Sciatic nerve (tissue), 2 donors: ENCODE measurements at regions of chr2 and their contacts with region 1.

Region 1: DNA sequence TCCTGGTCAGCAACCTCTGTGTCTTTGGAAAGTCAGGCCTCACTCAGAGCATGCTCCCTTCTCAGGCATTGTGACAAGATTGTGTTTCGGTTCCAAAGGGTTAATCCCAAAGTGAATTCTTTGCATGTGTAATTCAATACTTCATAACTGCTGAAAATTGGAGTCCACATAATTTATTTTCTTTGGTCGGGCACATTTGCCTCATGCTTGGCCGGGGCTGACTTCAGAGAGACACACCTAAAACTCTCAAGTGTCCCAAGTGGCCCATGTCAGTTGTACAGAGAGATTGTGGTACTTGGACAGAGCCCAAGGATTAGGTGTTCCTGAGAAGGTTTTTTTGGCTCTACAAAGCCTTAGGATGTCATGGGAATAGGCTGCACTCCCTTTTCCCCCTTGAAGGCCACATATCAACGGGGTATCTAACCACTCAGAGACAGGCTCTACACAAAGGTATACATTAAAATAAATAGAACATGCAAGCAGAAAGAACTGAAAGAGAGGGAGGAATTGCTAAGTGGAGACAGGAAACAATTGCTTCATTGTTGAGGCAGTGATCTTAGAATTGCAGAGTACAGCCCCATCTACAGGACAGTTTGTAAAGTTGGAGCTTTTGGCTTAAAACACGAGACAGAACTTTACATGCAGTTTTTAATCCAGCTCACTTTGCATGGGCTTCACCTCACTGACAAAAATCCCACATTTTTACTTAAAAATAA is 1232.3 kb upstream of the ZEB2 start:
- DNase-seq: peak; percentile 59
- ATAC-seq: peak; percentile 87

Region 2: GRCh38 chr2:144519934-144520731 is 1232.1 kb before region 1 on chr2 and contains the start of gene ZEB2:
- intact Hi-C with region 1: loop called (anchors 10 kb)
- DNase-seq: peak; percentile 81
- ATAC-seq: peak; percentile 73
- total RNA-seq, gene ZEB2: 440 TPM